ENCODE measurements at regions of chr3 and their contacts with region 1.

Region 1: DNA sequence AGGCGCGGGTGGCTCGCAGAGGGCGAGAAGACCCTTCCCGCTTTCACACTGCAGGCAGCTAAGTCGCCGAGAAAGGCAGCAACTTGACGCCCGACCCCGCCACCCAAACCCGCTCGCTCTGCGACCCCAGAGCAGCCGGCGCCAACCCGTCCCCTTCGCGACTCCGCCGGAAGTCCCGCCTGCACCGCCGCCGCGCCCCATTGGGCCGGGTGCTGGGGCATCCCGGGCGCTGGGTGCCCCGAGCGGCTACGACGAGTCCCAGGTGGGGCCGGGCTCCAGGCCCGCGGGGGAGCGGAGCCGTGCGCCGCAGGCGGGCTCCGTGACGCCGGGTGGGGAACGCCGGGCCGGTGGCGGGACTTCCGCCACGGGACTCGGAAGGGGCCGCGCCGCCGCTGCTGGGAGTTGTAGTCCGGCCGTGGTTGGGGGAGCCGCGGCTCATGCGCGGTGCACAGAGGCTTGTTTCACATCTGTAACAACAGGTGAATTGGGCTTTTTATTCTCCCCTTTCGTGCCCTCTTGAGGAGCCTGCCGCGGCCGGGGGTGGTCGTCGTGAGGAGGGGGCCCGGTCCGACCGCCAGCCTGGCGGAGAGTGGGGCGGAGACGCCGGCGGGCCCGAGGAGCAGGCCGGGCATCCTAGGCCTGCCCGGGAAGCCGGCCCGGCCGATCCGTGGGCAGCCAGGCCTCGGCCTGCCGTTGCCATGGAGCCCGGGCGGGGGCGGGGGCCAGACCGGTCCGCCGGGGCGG is at the start of gene DHX30:
- DNase-seq: peak; percentile 92
- H3K4me3 ChIP-seq: peak within 1 kb of the TSS; percentile 57 to 93 (median 82)
- H3K27ac ChIP-seq: peak within 1 kb of the TSS; percentile 96 to 98 (median 96)
- H3K4me1 ChIP-seq: peaks cover 0 to 24% (median 19%) of the 10 kb centered on the region in 4 donors
- H3K27me3 ChIP-seq: no peaks in the 10 kb centered on the region
- CTCF ChIP-seq: no peak
- EP300 ChIP-seq: no peak
- POLR2A ChIP-seq: peak in 1 of 2 donors; percentile 37
- total RNA-seq, gene DHX30: 43.8 to 57.6 (median 56.0) TPM

Region 2: DNA sequence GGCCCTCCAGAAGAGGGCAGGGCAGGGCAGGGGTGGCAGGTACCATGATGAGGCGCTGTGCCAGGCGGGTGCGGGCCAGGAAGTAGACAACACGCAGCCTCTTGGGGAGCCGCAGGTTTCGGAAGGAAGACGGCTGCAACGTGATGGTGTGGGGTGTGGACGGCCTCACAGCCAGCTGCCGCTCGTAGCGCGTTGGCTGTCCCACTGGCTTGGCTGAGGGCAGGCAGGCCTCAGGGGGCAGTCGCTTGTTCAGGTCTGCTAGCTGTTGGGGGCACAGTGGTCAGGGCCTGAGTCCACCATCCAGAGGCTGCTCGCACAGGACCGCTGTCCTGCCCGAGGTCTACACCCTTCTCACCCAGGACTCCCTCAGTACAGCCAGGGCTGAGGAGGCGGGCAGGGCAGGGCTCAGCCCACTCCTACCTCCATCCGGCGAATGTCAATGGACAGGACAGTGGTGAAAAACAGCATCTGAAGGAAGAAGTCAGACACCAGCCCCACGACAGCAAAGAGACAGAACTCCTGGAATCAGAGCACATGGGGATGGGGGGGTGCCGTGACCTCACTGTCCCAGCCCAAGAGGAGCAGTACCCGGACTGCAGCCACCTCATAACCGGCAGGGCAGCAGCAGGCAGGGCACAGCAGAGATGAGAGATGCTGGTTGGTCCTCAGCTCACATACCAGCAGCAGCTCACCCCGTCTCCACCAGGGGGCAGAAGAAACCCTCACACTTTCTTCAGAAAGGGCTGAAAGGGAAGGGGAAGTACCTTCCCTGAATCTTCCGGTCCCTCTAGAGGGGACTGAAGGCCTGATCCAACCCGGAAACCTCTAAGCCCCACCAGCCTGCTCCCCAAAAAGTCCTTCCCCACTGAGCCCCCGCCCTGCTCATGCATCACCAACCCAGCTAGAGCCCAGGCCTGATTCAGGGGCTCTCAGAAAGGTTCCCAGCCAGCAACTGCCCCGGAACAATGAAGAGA is 382.1 kb before region 1 on chr3:
- intact Hi-C with region 1: loop called (anchors 10 kb)
- DNase-seq: peak; percentile 91
- H3K4me3 ChIP-seq: no peak overlapping the region
- H3K27ac ChIP-seq: peak overlapping the region; percentile 55 to 76 (median 69)
- H3K4me1 ChIP-seq: peaks cover 0 to 18% (median 12%) of the 10 kb centered on the region in 4 donors
- H3K27me3 ChIP-seq: no peaks in the 10 kb centered on the region
- CTCF ChIP-seq: peak; percentile 86 to 96 (median 90)
- EP300 ChIP-seq: no peak
- POLR2A ChIP-seq: no peak

Region 3: DNA sequence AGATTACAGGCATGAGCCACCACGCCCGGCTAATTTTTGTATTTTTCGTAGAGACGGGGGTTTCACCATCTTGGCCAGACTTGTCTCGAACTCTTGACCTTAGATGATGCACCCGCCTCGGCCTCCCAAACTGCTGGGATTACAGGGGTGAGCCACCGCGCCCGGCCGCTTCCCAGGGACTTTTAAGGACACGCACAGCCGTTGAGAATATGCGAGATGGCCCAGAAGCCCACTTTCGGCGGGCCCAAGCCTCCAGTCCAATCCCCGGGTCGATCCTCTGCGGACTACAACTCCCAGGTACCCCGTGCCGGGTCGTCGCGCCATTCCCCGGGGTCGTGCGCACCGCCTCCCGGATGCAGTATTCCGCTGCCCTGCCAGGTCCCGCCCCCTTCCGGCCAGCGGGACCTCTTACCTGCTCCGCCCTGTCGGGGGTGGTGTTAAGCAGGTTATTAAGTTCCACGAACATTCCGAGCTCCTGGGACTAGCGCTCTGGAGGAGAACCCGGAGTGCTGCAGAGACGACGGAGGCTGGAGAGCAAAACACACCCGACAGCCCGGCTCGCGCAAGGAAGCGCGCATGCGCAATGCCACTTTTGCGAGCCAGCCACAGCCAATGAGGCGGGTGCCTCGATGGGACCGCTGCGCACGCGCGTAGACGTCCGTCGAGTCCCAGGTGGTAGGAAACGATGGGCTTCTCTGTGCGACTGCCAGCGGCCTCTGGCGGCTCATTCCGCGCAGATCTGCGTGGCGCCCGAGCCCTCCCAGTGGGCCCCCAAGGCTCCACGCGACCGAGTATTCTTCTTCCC is 289.6 kb before region 1 on chr3 and contains the start of gene ELP6:
- intact Hi-C with region 1: loop called (anchors 5 kb)
- DNase-seq: peak; percentile 99
- H3K4me3 ChIP-seq: peak within 1 kb of the TSS; percentile 66 to 75 (median 69)
- H3K27ac ChIP-seq: peak within 1 kb of the TSS; percentile 83 to 98 (median 94)
- H3K4me1 ChIP-seq: peaks cover 0 to 15% (median 13%) of the 10 kb centered on the region in 4 donors
- H3K27me3 ChIP-seq: no peaks in the 10 kb centered on the region
- CTCF ChIP-seq: peak in 3 of 4 experiments; percentile 35 to 46 (median 37)
- EP300 ChIP-seq: no peak
- POLR2A ChIP-seq: peak; percentile 27 to 46
- total RNA-seq, gene ELP6: 17.1 to 38.9 (median 19.5) TPM

Region 4: GRCh38 chr3:47849699-47850563 is 47.0 kb after region 1 on chr3:
- intact Hi-C with region 1: no loop called
- DNase-seq: no peak
- H3K4me3 ChIP-seq: no peak overlapping the region
- H3K27ac ChIP-seq: peak overlapping the region in 2 of 4 donors; percentile 11 to 25
- H3K4me1 ChIP-seq: no peaks in the 10 kb centered on the region
- H3K27me3 ChIP-seq: no peaks in the 10 kb centered on the region
- CTCF ChIP-seq: peak in 2 of 4 experiments; percentile 31 to 42
- EP300 ChIP-seq: no peak
- POLR2A ChIP-seq: no peak

Measured in sigmoid colon (tissue), 7 donors.